Activated CD4-positive, alpha-beta memory T cell treated with anti-CD3 and anti-CD28 coated beads, Interleukin-2, amount 10 ng/mL, durations not matched to agents 7 days and 5 days (primary cell): ENCODE measurements at regions of chr22 and their contacts with region 1.

Region 1: DNA sequence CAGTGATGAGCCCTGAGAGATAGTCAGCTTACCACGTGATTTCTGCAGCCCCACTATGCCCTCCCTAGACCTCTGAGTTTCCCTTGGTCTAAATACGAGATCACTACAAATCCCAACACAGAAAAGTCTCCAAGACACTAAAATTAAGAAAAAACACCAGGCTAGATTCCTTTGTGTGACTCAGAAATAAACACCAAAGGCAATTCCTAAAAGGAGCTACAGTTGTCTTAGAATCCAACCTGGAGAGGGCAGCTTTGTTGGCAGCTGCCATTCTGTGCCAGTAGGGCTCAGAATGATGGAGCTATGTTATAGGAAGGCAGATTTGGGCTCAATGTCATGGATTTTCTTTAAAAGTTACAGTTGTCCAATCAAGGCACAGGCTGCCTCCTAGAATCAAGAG is 37.1 kb upstream of the HMGXB4 start:
- DNase-seq: no peak
- H3K4me3 Mint-ChIP-seq: no peak overlapping the region
- H3K27ac Mint-ChIP-seq: no peak overlapping the region
- H3K4me1 Mint-ChIP-seq: no peaks in the 10 kb centered on the region
- H3K27me3 Mint-ChIP-seq: peaks cover 6% of the 10 kb centered on the region

Region 2: DNA sequence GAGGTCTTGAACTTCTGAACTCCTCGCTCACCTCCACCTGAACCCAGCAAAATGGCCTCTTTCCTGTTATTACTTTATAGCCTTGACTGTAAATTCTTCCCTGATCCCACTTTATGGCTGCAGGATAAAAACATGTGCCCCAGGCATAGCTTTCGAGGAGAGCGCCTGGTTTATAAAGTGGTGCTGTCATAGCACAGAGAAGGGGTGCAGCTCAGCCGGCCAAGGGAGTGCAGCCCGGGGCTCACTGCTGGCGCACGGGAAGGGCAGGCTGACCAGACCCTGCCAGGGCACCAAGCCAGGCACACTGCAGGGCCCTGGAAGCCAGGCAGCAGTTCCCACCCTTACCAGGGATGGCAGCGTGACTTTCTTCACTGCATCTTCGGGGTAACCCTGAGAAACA is 103.4 kb before region 1 on chr22:
- CTCF ChIA-PET with region 1: no interaction called
- POLR2A ChIA-PET with region 1: no interaction called
- DNase-seq: no peak
- H3K4me3 Mint-ChIP-seq: no peak overlapping the region
- H3K27ac Mint-ChIP-seq: no peak overlapping the region
- H3K4me1 Mint-ChIP-seq: no peaks in the 10 kb centered on the region
- H3K27me3 Mint-ChIP-seq: no peaks in the 10 kb centered on the region

Region 3: GRCh38 chr22:35128637-35129036 is 91.6 kb before region 1 on chr22:
- CTCF ChIA-PET with region 1: no interaction called
- POLR2A ChIA-PET with region 1: no interaction called
- DNase-seq: no peak
- H3K4me3 Mint-ChIP-seq: no peak overlapping the region
- H3K27ac Mint-ChIP-seq: no peak overlapping the region
- H3K4me1 Mint-ChIP-seq: peaks cover 2% of the 10 kb centered on the region
- H3K27me3 Mint-ChIP-seq: peaks cover 20% of the 10 kb centered on the region

Region 4: DNA sequence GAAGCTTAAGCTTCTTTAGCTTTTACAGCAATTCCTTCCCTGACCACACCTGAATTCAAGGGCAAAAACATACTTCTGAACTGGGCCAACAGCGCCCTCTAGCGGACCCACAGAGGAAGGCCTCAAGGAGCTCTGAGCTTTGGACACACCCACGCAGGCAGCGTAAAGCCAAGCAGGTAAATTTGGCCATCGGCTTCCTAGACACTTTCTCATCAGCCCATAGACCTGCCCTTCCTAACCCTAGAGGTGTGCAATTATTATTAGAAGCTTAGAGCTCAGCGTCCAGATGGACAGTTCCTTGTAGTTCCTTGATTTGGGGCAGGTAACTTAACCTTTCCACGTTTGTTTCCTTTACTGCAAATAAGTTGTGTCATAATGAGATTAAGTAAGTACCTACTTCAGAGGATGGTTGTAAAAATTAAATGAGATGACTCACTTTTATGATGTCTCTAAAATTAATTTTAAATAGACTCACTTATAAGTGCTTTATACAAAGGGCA is 11.4 kb after region 1 on chr22:
- CTCF ChIA-PET with region 1: interaction called, 12 read pairs
- POLR2A ChIA-PET with region 1: no interaction called
- DNase-seq: peak; percentile 75
- H3K4me3 Mint-ChIP-seq: no peak overlapping the region
- H3K27ac Mint-ChIP-seq: no peak overlapping the region
- H3K4me1 Mint-ChIP-seq: peaks cover 4% of the 10 kb centered on the region
- H3K27me3 Mint-ChIP-seq: peaks cover 36% of the 10 kb centered on the region